OCI-LY7 (cell line): ENCODE measurements at regions of chr12 and their contacts with region 1.

Region 1: GRCh38 chr12:123983822-123984485 is 10.9 kb downstream of the ZNF664 start:
- DNase-seq: peak; percentile 76
- H3K4me3 ChIP-seq: no peak overlapping the region
- H3K27ac ChIP-seq: no peak overlapping the region
- H3K4me1 ChIP-seq: no peaks in the 10 kb centered on the region
- CTCF ChIP-seq: peak; percentile 83

Region 2: DNA sequence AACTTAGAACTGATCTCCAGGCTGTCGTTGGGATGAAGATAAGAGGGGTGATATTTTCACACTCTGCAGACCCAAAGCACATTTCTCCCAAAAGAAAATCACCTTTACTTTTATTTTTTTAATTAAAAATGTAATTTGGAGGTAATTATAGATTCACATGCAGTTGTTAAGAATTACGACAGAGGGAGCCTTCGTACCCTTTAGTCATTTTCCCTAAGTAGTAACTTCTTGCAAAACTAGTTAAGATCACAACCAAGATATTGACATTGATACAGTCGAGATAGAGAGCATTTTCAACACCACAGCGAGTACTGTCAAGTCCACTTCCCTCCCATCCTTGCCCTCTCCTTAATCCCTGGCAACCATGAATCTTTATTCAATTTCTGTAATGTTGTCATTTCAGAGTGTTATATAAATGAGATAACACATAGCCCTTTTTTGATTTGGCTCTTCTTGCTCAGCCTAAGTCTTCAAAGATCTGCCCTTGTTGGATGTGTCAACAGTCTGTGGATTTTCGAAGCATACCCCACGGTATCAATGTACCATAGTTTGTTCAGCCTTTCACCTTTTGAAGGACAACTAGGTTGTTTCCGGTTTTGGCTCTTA is 182.3 kb before region 1 on chr12:
- CTCF ChIA-PET with region 1: no interaction called
- POLR2A ChIA-PET with region 1: no interaction called
- intact Hi-C with region 1: loop called (anchors 5 kb)
- DNase-seq: peak; percentile 28
- H3K4me3 ChIP-seq: no peak overlapping the region
- H3K27ac ChIP-seq: no peak overlapping the region
- H3K4me1 ChIP-seq: no peaks in the 10 kb centered on the region
- CTCF ChIP-seq: peak; percentile 80

Region 3: DNA sequence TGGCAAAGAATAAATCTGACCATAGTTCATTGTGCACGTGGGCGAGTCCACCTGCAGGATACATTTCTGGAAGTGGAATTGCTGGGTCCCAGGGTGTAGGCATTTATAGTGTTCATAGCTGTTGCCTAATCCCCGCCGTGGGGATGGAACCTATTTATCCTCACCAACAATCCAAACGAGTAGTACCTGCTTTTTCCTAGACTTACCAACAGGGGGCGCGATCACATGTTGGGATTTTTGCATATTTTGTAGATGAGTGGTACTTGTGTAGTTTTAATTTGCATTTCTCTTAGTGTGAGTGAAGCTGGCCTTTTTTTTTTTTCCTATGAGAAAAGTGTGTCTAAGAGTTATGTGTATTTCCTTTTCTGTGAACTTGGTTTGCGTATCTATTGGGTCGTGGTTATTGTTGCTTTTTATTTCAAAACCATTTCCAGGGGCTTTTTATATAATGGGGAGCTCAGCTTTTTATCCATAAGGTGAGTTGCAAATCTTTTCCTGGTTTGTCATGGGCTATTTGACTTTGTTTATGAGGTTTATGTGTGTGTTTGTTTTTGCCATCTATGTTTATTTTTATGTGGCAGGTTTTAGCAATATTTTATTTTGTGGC is 78.5 kb before region 1 on chr12:
- CTCF ChIA-PET with region 1: no interaction called
- POLR2A ChIA-PET with region 1: no interaction called
- intact Hi-C with region 1: loop called (anchors 1 kb)
- DNase-seq: peak; percentile 56
- H3K4me3 ChIP-seq: no peak overlapping the region
- H3K27ac ChIP-seq: no peak overlapping the region
- H3K4me1 ChIP-seq: no peaks in the 10 kb centered on the region
- CTCF ChIP-seq: peak; percentile 94

Region 4: GRCh38 chr12:124026755-124027745 is 43.1 kb after region 1 on chr12:
- CTCF ChIA-PET with region 1: no interaction called
- POLR2A ChIA-PET with region 1: no interaction called
- intact Hi-C with region 1: no loop called
- DNase-seq: no peak
- H3K4me3 ChIP-seq: no peak overlapping the region
- H3K27ac ChIP-seq: no peak overlapping the region
- H3K4me1 ChIP-seq: no peaks in the 10 kb centered on the region
- CTCF ChIP-seq: no peak